ENCODE measurements at regions of chr4 and their contacts with region 1.

Region 1: GRCh38 chr4:71229477-71230270 is 109.1 kb upstream of the SLC4A4 start:
- DNase-seq: peak in 5 of 7 donors; percentile 23 to 37 (median 34)
- H3K4me3 ChIP-seq: no peak overlapping the region
- H3K27ac ChIP-seq: no peak overlapping the region
- H3K4me1 ChIP-seq: peaks cover 0 to 4% of the 10 kb centered on the region in 2 donors
- H3K27me3 ChIP-seq: no peaks in the 10 kb centered on the region
- CTCF ChIP-seq: peak; percentile 41 to 69 (median 58)
- POLR2A ChIP-seq: no peak

Region 2: DNA sequence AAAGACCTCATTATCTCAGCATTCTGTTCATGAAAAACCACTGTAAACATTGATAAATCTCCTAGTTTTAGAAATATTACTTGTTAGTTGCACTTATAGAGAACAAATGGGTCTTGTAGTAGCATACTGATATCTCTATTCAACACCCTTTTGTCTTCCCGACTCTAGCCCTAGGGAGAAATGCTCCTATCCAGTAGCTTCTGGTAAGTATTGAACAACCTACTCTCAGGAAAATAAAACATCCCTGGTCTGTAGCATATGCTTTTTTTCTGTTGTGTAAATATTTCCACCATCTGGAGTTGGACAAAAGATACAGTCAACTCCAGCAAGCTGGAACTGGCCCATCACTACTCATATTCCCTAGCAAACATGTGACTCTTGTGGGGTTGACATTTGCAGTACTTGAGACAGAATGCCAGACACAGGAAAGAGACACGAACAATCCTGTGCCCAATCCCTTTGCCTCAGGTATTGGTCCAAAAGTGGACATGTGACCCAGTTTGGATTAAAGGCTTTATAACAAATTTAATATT is 366.0 kb after region 1 on chr4:
- intact Hi-C with region 1: no loop called
- DNase-seq: no peak
- H3K4me3 ChIP-seq: no peak overlapping the region
- H3K27ac ChIP-seq: no peak overlapping the region
- H3K4me1 ChIP-seq: no peaks in the 10 kb centered on the region
- H3K27me3 ChIP-seq: no peaks in the 10 kb centered on the region
- CTCF ChIP-seq: no peak
- POLR2A ChIP-seq: no peak

Region 3: DNA sequence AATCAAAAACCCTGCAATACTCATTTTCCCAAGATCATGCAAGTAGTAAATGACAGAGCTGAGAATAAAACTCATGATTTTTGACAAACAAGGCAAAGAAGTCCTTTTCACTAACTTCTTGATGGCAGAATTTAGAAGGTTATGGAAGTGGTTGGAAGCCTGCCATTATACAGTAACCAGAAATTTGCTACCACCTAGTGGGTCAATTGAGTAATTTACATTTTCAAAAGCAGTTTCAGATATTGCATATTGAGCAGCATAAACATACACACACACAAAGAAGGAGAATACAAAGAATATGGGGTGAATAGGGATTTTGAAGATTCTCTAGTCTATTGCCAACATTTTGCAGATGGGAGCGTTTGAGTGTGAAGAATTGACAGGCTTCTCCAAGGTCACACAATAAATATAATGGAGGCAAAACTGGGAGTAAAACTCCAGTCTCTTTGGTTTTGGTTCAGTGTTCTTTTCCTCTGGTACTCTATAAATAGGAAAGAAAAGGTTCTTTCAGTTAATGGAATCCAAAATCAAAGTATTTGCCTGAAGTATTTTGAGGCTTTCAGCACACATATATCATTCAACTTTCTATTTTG is 484.0 kb after region 1 on chr4:
- intact Hi-C with region 1: loop called in 1 of 2 experiments (anchors 10 kb)
- DNase-seq: peak in 2 of 7 donors; percentile 16 to 22
- H3K4me3 ChIP-seq: no peak overlapping the region
- H3K27ac ChIP-seq: no peak overlapping the region
- H3K4me1 ChIP-seq: no peaks in the 10 kb centered on the region
- H3K27me3 ChIP-seq: no peaks in the 10 kb centered on the region
- CTCF ChIP-seq: peak; percentile 32 to 71 (median 66)
- POLR2A ChIP-seq: no peak